ENCODE measurements at regions of chr1 and their contacts with region 1.

Region 1: DNA sequence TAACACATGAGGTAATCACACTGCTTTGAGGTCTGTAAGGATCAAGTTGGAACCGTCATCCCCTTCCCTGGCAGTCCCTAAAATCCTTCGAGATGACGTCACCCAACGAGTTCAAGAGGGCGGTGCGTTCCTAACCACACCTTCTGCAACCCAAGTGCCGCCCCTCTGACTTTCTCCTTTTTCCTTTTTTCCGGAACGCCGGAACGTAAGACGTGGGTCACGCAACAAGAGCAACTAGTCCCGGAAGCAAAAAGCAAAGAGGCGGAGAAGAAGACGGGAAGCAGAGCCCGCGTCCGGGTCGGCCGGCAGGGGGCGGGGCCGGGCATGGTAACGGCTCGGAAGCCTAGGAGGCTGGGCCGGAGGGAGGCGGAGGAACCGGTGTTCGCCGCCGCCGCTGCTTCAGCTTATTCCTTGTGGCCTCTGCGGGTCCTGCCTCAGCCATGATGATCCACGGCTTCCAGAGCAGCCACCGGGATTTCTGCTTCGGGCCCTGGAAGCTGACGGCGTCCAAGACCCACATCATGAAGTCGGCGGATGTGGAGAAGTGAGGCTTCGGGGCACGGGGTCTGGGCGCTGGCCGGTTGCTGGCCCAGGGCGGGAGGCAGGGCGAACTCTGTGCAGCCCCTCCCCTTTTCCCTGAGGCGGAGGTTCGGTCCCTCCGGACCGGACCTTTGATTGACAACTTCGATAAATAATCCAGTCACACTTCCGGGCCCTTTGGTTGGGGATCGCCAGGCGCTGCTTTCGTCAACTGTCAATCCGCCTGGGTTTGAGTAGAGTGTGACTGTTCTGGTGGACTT is at the start of gene TIPRL:
- DNase-seq: peak; percentile 96
- ATAC-seq: peak; percentile 96 to 99 (median 98)
- H3K4me3 ChIP-seq: peak within 1 kb of the TSS; percentile 74
- H3K27ac ChIP-seq: peak within 1 kb of the TSS; percentile 88
- H3K4me1 ChIP-seq: peaks cover 10% of the 10 kb centered on the region
- H3K27me3 ChIP-seq: no peaks in the 10 kb centered on the region
- CTCF ChIP-seq: peak; percentile 73
- total RNA-seq, gene TIPRL: 27.1 to 34.7 (median 31.2) TPM

Region 2: DNA sequence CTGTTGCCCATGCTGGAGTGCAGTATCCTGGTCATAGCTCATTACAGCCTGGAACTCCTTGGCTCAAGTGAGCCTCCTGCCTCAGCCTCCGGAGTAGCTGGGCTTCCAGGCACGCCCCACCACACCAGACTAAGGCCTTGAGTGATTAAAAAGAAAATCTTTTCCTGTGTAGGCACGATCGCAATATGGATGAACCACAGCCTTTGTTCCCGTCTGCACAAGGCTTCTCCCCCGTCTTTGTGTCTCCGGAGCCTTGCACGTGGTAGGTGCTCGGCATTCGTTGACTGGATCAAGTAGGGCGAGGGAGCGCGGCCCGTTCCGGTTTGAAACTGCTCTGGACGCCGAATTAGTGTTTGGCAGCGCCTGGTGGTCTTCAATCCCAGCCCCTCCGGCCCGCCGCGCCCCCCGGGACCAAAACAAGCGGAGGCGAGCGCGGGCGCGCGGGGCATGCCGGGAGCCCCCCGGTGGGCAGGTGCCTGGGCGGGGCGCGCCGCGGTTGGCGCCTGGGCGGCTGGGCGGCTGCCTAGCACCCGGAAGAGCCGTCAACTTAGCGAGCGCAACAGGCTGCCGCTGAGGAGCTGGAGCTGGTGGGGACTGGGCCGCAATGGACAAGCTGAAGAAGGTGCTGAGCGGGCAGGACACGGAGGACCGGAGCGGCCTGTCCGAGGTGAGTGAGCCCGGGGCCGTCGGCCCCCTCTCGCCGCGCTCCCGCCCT is 46.8 kb after region 1 on chr1 and contains the start of gene SFT2D2:
- intact Hi-C with region 1: loop called in 1 of 2 experiments (anchors 5 kb)
- DNase-seq: peak; percentile 79 to 85
- ATAC-seq: peak; percentile 95 to 99 (median 98)
- H3K4me3 ChIP-seq: peak within 1 kb of the TSS; percentile 95
- H3K27ac ChIP-seq: peak within 1 kb of the TSS; percentile 69
- H3K4me1 ChIP-seq: peaks cover 8% of the 10 kb centered on the region
- H3K27me3 ChIP-seq: no peaks in the 10 kb centered on the region
- CTCF ChIP-seq: no peak
- total RNA-seq, gene SFT2D2: 12.7 to 15.5 (median 15.0) TPM